T-cell (primary cell): ENCODE measurements at regions of chr5 and their contacts with region 1.

Region 1: GRCh38 chr5:36222620-36223019 is 19.1 kb downstream of the NADK2 start:
- DNase-seq: no peak
- ATAC-seq: no peak
- H3K4me3 ChIP-seq: no peak overlapping the region
- H3K4me3 Mint-ChIP-seq: no peak overlapping the region
- H3K27ac ChIP-seq: no peak overlapping the region
- H3K27ac Mint-ChIP-seq: no peak overlapping the region
- H3K4me1 ChIP-seq: no peaks in the 10 kb centered on the region
- H3K4me1 Mint-ChIP-seq: no peaks in the 10 kb centered on the region
- H3K27me3 ChIP-seq: no peaks in the 10 kb centered on the region
- H3K27me3 Mint-ChIP-seq: no peaks in the 10 kb centered on the region

Region 2: GRCh38 chr5:35015063-35015462 is 1207.6 kb before region 1 on chr5:
- CTCF ChIA-PET with region 1: no interaction called
- POLR2A ChIA-PET with region 1: interaction called in 1 of 2 experiments, 12 read pairs
- DNase-seq: no peak
- ATAC-seq: no peak
- H3K4me3 ChIP-seq: no peak overlapping the region
- H3K4me3 Mint-ChIP-seq: no peak overlapping the region
- H3K27ac ChIP-seq: no peak overlapping the region
- H3K27ac Mint-ChIP-seq: no peak overlapping the region
- H3K4me1 ChIP-seq: no peaks in the 10 kb centered on the region
- H3K4me1 Mint-ChIP-seq: no peaks in the 10 kb centered on the region
- H3K27me3 ChIP-seq: peaks cover 0 to 2% of the 10 kb centered on the region in 2 experiments
- H3K27me3 Mint-ChIP-seq: peaks cover 11 to 18% of the 10 kb centered on the region in 2 donors

Region 3: GRCh38 chr5:36147681-36148080 is 74.9 kb before region 1 on chr5:
- CTCF ChIA-PET with region 1: no interaction called
- POLR2A ChIA-PET with region 1: no interaction called
- DNase-seq: no peak
- ATAC-seq: no peak
- H3K4me3 ChIP-seq: no peak overlapping the region
- H3K4me3 Mint-ChIP-seq: no peak overlapping the region
- H3K27ac ChIP-seq: no peak overlapping the region
- H3K27ac Mint-ChIP-seq: no peak overlapping the region
- H3K4me1 ChIP-seq: peaks cover 11 to 17% of the 10 kb centered on the region in 2 experiments
- H3K4me1 Mint-ChIP-seq: peaks cover 47 to 51% (median 50%) of the 10 kb centered on the region in 3 donors
- H3K27me3 ChIP-seq: no peaks in the 10 kb centered on the region
- H3K27me3 Mint-ChIP-seq: no peaks in the 10 kb centered on the region

Region 4: DNA sequence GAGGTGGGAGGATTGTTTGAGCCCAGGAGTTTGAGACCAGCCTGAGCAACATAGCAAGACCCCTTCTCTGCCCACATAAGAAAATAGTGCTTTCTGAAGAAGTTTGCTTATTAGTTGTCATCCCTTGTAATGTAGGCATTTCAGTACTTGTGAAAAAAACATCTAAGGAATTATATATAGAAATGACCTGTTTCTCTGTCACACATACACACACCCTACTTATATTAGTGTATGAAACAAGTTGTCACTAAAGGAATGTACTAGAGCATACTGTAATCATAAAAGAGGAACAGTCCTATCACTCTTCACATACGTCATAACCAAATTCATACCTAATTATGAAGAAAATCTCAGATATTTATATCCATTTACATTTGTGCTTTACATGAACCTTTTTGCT is 776.0 kb after region 1 on chr5:
- CTCF ChIA-PET with region 1: no interaction called
- POLR2A ChIA-PET with region 1: no interaction called
- DNase-seq: no peak
- ATAC-seq: no peak
- H3K4me3 ChIP-seq: no peak overlapping the region
- H3K4me3 Mint-ChIP-seq: no peak overlapping the region
- H3K27ac ChIP-seq: no peak overlapping the region
- H3K27ac Mint-ChIP-seq: peak overlapping the region in 1 of 2 donors; percentile 46
- H3K4me1 ChIP-seq: no peaks in the 10 kb centered on the region
- H3K4me1 Mint-ChIP-seq: peaks cover 0 to 13% (median 6%) of the 10 kb centered on the region in 3 donors
- H3K27me3 ChIP-seq: no peaks in the 10 kb centered on the region
- H3K27me3 Mint-ChIP-seq: no peaks in the 10 kb centered on the region